Activated CD4-positive, alpha-beta memory T cell treated with anti-CD3 and anti-CD28 coated beads, Interleukin-2, amount 10 ng/mL, durations not matched to agents 7 days and 5 days (primary cell): ENCODE measurements at regions of chr17 and their contacts with region 1.

Region 1: DNA sequence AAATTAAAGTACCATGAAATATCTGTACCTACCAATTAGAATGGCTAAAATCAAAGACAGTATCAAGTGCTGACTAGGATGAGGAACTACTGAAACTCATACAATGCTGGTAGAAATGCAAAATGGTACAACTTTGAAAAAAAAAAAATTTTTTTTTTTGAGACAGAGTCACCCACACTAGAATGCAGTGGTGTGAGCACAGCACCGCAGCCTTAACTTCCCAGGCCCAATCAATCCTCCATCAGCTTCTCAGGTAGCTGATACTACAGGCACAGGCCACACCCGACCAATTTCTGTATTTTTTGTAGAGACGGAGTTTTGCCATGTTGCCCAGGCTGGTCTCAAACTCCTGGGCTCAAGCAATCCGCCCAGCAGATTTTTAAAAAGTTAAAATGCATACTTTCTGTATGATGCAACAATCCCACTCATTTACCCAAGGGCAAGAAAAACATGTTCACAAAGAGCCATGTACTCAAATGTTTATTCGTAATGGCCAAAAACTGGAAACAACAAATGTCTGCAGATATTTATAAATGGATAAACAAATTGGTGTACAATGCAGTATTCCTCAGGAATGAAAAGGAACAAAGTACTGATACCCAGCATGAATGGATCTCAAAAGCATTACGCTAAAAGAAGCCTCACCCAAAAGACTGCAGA is 8.7 kb downstream of the SMURF2 start:
- DNase-seq: no peak
- H3K4me3 Mint-ChIP-seq: no peak overlapping the region
- H3K27ac Mint-ChIP-seq: no peak overlapping the region
- H3K4me1 Mint-ChIP-seq: peaks cover 21% of the 10 kb centered on the region
- H3K27me3 Mint-ChIP-seq: no peaks in the 10 kb centered on the region

Region 2: DNA sequence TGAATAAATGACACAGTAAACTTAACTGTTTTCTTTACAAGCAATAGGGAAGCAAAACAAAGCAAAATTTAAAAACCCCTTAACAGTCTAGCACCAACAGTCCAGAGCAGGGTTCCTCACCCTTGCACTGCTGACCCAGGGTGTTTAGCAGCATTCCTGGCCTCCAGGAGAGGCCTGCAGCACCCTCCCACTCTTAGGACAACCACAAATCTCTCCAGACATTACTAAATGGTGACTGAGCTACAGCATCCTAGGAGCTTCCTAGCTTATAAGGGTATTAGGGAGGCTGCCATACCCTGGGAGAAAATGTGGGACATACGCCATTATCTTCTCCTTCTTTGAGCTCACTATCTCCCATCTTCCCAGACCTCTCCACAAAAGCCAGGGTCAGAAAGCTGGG is 172.5 kb before region 1 on chr17:
- CTCF ChIA-PET with region 1: no interaction called
- POLR2A ChIA-PET with region 1: no interaction called
- DNase-seq: no peak
- H3K4me3 Mint-ChIP-seq: no peak overlapping the region
- H3K27ac Mint-ChIP-seq: no peak overlapping the region
- H3K4me1 Mint-ChIP-seq: peaks cover 12% of the 10 kb centered on the region
- H3K27me3 Mint-ChIP-seq: no peaks in the 10 kb centered on the region

Region 3: DNA sequence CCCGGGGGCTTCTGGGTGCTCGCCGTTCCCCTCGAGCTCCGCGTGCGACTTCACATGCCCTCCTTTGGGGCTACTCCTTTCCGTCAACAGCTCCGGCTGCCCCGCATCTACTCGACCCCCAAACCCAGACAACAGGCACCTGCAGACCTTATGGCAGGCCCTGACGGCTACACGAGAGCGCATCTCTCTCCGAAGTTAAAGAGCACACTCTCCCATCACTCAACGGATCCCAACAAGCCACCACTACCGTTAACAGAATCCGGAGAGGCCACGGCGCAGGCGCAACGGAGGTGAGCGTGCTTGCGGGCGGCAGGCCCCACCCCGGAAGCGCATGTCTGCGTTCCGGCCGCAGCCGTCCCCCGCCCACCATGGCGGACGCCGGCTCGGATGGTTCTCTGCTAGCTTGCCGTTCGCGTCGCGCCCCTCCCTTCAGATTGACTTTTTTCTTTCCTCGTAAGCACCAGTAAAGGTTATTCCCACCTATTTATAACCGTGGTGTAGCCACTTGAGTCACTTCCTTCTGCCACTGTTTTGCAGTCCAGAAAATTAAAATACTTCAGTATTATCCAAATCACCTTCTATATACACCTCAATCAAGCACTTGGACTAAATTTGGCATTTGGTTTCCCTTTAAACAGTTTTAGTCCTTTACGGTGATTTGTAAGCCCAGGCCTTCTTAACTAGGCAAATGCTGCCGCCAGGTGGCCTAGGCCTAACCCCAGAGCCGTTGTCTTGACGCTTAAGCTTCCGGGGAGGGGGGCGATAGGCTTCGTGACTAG is 156.5 kb before region 1 on chr17 and contains the start of gene POLG2:
- CTCF ChIA-PET with region 1: interaction called, 14 read pairs
- POLR2A ChIA-PET with region 1: interaction called, 8 read pairs
- DNase-seq: peak; percentile 96
- H3K4me3 Mint-ChIP-seq: peak within 1 kb of the TSS; percentile 99
- H3K27ac Mint-ChIP-seq: peak within 1 kb of the TSS; percentile 99
- H3K4me1 Mint-ChIP-seq: peaks cover 82% of the 10 kb centered on the region
- H3K27me3 Mint-ChIP-seq: no peaks in the 10 kb centered on the region
- total RNA-seq, gene POLG2: 34.7 to 35.2 TPM

Region 4: GRCh38 chr17:64599187-64599676 is 54.2 kb before region 1 on chr17:
- CTCF ChIA-PET with region 1: interaction called, 10 read pairs
- POLR2A ChIA-PET with region 1: no interaction called
- DNase-seq: peak; percentile 78
- H3K4me3 Mint-ChIP-seq: peak overlapping the region; percentile 22
- H3K27ac Mint-ChIP-seq: peak overlapping the region; percentile 31
- H3K4me1 Mint-ChIP-seq: peaks cover 33% of the 10 kb centered on the region
- H3K27me3 Mint-ChIP-seq: no peaks in the 10 kb centered on the region

Region 5: DNA sequence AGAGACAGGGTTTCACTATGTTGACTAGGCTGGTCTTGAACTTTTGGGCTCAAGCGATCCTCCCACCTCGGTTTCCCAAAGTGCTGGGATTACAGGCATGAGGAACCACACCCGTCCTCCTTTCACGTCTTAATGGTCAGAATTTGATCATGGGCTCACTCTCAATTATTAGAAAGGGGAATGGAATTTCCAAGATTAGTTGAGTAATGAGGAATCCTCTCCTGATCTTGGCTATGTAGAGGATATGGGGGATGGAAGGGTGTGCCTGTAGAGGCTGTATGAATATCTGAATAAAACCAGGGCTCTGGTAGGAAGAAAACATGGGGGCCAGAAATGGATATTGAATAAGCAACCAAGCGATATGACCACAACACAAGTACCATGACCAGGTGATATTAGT is 34.5 kb after region 1 on chr17:
- CTCF ChIA-PET with region 1: no interaction called
- POLR2A ChIA-PET with region 1: no interaction called
- DNase-seq: no peak
- H3K4me3 Mint-ChIP-seq: no peak overlapping the region
- H3K27ac Mint-ChIP-seq: no peak overlapping the region
- H3K4me1 Mint-ChIP-seq: no peaks in the 10 kb centered on the region
- H3K27me3 Mint-ChIP-seq: peaks cover 2% of the 10 kb centered on the region

Region 6: DNA sequence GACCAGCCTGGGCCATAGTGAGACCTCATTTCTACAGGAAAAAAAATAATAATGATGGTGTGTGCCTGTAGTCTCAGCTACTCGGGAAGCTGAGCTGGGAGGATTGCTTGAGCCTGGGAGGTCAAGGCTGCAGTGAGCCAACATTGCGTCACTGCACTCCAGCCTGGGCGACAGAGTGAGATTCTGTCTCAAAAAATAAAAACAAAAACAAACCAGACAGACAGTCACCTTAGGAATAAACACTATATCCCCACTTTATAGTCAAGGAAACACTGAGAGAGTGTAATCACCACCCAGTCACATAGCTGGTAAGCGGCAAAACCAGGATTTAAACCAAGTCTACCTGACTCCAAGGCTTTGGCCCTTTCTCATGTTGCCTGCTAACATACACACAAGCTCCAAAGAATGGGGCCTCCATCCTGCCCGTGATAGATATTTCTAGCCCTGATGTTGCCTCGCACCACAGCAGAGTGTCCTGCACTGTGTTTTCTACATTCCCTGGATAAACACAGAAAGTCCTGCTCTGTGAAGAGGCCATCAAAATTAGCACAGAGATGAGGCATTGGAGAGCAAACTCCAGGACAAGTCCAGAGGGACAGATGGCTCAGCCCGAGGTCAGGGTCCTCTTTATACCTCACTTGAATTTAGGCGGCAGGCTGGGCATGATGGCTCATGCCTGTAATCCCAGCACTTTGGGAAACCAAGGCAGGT is 74.7 kb after region 1 on chr17:
- CTCF ChIA-PET with region 1: no interaction called
- POLR2A ChIA-PET with region 1: no interaction called
- DNase-seq: no peak
- H3K4me3 Mint-ChIP-seq: no peak overlapping the region
- H3K27ac Mint-ChIP-seq: no peak overlapping the region
- H3K4me1 Mint-ChIP-seq: no peaks in the 10 kb centered on the region
- H3K27me3 Mint-ChIP-seq: no peaks in the 10 kb centered on the region